ENCODE measurements at regions of chr2 and their contacts with region 1.

Region 1: GRCh38 chr2:231297108-231297908 is 98.2 kb upstream of the B3GNT7 start:
- DNase-seq: peak; percentile 37
- H3K4me3 ChIP-seq: no peak overlapping the region
- H3K27ac ChIP-seq: no peak overlapping the region
- H3K27me3 ChIP-seq: no peaks in the 10 kb centered on the region
- CTCF ChIP-seq: peak; percentile 85

Region 2: DNA sequence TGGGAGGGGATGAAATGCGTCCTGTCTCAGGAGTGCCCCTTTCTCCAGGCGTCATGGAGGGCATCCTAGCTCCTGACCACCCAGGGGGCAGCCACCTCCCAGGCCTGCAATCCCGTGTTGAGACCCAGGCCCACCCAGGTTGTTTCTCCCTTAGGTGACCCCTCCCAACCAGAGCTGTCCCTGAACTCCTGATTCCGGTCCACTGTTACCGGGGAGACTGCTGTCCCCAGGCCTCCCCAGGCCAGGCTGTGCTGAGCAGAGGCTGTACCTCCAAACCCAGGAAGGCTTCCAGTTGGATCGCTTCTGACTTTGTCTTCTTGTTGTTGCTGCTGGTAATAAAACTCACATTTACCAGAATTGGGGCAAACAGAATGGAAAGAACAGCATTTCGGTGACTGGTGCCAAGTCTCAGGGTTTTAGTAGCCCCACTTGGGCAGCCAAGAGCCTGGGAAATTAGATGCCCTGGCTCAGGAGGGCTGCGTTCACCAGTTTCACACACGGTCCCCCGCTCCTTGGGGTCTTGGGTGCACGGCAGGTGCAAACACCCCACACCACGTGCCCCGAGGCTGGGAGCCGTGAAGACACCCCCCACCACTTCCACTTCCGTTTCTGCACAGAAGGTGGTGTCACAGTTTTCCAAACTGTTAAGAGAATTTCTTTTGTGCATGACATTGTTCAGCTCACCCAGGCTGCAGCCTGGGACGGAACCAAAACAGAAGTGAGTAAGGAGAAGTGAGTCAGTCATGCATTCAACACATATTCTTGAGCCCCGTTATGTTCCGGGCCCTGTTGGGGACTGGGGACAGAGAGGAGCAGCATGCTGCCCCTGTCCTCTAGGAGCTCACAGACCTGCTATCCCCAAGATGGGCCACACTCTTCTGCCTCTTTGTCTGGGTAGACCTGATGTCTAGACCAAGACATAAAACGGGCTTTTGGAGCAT is 403.2 kb before region 1 on chr2:
- CTCF ChIA-PET with region 1: no interaction called
- POLR2A ChIA-PET with region 1: no interaction called
- DNase-seq: no peak
- H3K4me3 ChIP-seq: no peak overlapping the region
- H3K27ac ChIP-seq: no peak overlapping the region
- H3K27me3 ChIP-seq: peaks cover 27% of the 10 kb centered on the region
- CTCF ChIP-seq: no peak

Region 3: GRCh38 chr2:231270221-231271114 is 26.8 kb before region 1 on chr2:
- CTCF ChIA-PET with region 1: interaction called, 11 read pairs
- POLR2A ChIA-PET with region 1: no interaction called
- DNase-seq: no peak
- H3K4me3 ChIP-seq: no peak overlapping the region
- H3K27ac ChIP-seq: no peak overlapping the region
- H3K27me3 ChIP-seq: no peaks in the 10 kb centered on the region
- CTCF ChIP-seq: no peak

Region 4: DNA sequence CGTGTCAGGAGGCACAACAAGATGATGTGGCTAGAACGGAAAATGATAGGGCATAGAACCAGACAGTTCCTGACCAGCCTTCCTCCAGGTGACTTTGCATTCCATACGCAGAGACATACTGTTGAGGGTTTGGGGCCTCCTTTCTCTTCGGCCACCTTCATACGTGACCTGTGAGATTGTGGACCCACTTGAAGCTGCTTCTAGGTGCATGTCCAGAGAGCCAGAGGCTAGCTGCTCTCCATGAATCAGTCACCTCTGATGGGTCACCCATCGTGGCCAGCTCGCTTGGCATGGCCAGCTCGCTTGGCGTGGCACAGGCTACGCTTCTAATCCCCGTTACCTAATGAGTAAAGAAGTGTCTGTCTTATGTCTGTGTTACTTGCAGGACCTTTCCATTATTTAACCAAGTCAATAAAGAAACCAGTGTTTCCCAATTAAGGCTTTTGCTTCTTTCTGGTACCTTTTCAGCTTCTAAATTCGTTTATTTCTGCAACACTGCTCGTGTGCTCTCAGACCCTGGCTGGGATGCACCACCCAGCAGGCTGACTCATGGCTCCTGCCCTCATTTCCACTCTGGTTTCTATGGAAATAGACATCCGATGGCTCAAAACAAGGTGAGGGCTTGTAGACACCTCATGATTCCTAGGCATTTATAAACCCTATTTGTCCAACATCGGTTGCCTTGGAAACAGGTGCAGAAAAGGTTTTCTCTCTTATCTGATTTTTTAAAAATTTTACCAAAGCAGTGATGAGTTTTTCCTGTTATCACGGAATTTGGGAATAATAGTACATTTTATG is 11.5 kb after region 1 on chr2:
- CTCF ChIA-PET with region 1: interaction called, 26 read pairs
- POLR2A ChIA-PET with region 1: no interaction called
- DNase-seq: no peak
- H3K4me3 ChIP-seq: no peak overlapping the region
- H3K27ac ChIP-seq: no peak overlapping the region
- H3K27me3 ChIP-seq: no peaks in the 10 kb centered on the region
- CTCF ChIP-seq: no peak

Region 5: GRCh38 chr2:231321556-231322334 is 24.4 kb after region 1 on chr2:
- CTCF ChIA-PET with region 1: interaction called, 12 read pairs
- POLR2A ChIA-PET with region 1: no interaction called
- DNase-seq: no peak
- H3K4me3 ChIP-seq: no peak overlapping the region
- H3K27ac ChIP-seq: no peak overlapping the region
- H3K27me3 ChIP-seq: no peaks in the 10 kb centered on the region
- CTCF ChIP-seq: no peak

Region 6: GRCh38 chr2:231399853-231400680 is 102.8 kb after region 1 on chr2:
- CTCF ChIA-PET with region 1: interaction called, 45 read pairs
- POLR2A ChIA-PET with region 1: no interaction called
- DNase-seq: no peak
- H3K4me3 ChIP-seq: no peak overlapping the region
- H3K27ac ChIP-seq: no peak overlapping the region
- H3K27me3 ChIP-seq: peaks cover 19% of the 10 kb centered on the region
- CTCF ChIP-seq: no peak

Region 7: GRCh38 chr2:231411831-231412617 is 114.7 kb after region 1 on chr2:
- CTCF ChIA-PET with region 1: interaction called, 173 read pairs
- POLR2A ChIA-PET with region 1: interaction called, 10 read pairs
- DNase-seq: peak; percentile 50
- H3K4me3 ChIP-seq: peak overlapping the region; percentile 73
- H3K27ac ChIP-seq: no peak overlapping the region
- H3K27me3 ChIP-seq: no peaks in the 10 kb centered on the region
- CTCF ChIP-seq: peak; percentile 92

Measured in AG04450 (cell line).